CD8-positive, alpha-beta T cell (primary cell): ENCODE measurements at regions of chr7 and their contacts with region 1.

Region 1: GRCh38 chr7:157612664-157613561 is 276.1 kb downstream of the DNAJB6 start:
- DNase-seq: peak; percentile 32 to 85 (median 74)
- ATAC-seq: peak; percentile 79
- H3K4me3 ChIP-seq: peak overlapping the region; percentile 58 to 70
- H3K4me3 Mint-ChIP-seq: peak overlapping the region; percentile 87
- H3K27ac ChIP-seq: peak overlapping the region in 1 of 2 experiments; percentile 53
- H3K27ac Mint-ChIP-seq: peak overlapping the region; percentile 80
- H3K4me1 ChIP-seq: peaks cover 19% of the 10 kb centered on the region
- H3K4me1 Mint-ChIP-seq: peaks cover 20% of the 10 kb centered on the region
- H3K27me3 ChIP-seq: no peaks in the 10 kb centered on the region
- H3K27me3 Mint-ChIP-seq: no peaks in the 10 kb centered on the region
- CTCF ChIP-seq: no peak

Region 2: GRCh38 chr7:157502701-157503111 is 110.2 kb before region 1 on chr7:
- CTCF ChIA-PET with region 1: no interaction called
- POLR2A ChIA-PET with region 1: interaction called, 3 read pairs
- intact Hi-C with region 1: loop called in 1 of 2 experiments (anchors 2 kb)
- DNase-seq: peak; percentile 45 to 93 (median 70)
- ATAC-seq: peak; percentile 95
- H3K4me3 ChIP-seq: peak overlapping the region; percentile 15 to 22
- H3K4me3 Mint-ChIP-seq: peak overlapping the region; percentile 79
- H3K27ac ChIP-seq: peak overlapping the region; percentile 50 to 53
- H3K27ac Mint-ChIP-seq: peak overlapping the region; percentile 92
- H3K4me1 ChIP-seq: peaks cover 22% of the 10 kb centered on the region
- H3K4me1 Mint-ChIP-seq: peaks cover 25% of the 10 kb centered on the region
- H3K27me3 ChIP-seq: no peaks in the 10 kb centered on the region
- H3K27me3 Mint-ChIP-seq: peaks cover 8% of the 10 kb centered on the region
- CTCF ChIP-seq: no peak

Region 3: GRCh38 chr7:157568770-157569584 is 43.9 kb before region 1 on chr7:
- CTCF ChIA-PET with region 1: no interaction called
- POLR2A ChIA-PET with region 1: no interaction called
- intact Hi-C with region 1: no loop called
- DNase-seq: peak; percentile 26 to 83 (median 62)
- ATAC-seq: peak; percentile 80
- H3K4me3 ChIP-seq: peak overlapping the region; percentile 40 to 52
- H3K4me3 Mint-ChIP-seq: peak overlapping the region; percentile 89
- H3K27ac ChIP-seq: peak overlapping the region in 1 of 2 experiments; percentile 20
- H3K27ac Mint-ChIP-seq: peak overlapping the region; percentile 79
- H3K4me1 ChIP-seq: peaks cover 16% of the 10 kb centered on the region
- H3K4me1 Mint-ChIP-seq: peaks cover 22% of the 10 kb centered on the region
- H3K27me3 ChIP-seq: peaks cover 0 to 6% of the 10 kb centered on the region in 2 experiments
- H3K27me3 Mint-ChIP-seq: peaks cover 2% of the 10 kb centered on the region
- CTCF ChIP-seq: no peak

Region 4: GRCh38 chr7:157684157-157684908 is 71.4 kb after region 1 on chr7:
- CTCF ChIA-PET with region 1: no interaction called
- POLR2A ChIA-PET with region 1: no interaction called
- intact Hi-C with region 1: loop called in 1 of 2 experiments (anchors 10 kb)
- DNase-seq: no peak
- ATAC-seq: no peak
- H3K4me3 ChIP-seq: no peak overlapping the region
- H3K4me3 Mint-ChIP-seq: peak overlapping the region; percentile 56
- H3K27ac ChIP-seq: no peak overlapping the region
- H3K27ac Mint-ChIP-seq: no peak overlapping the region
- H3K4me1 ChIP-seq: peaks cover 34% of the 10 kb centered on the region
- H3K4me1 Mint-ChIP-seq: peaks cover 30% of the 10 kb centered on the region
- H3K27me3 ChIP-seq: peaks cover 23 to 59% of the 10 kb centered on the region in 2 experiments
- H3K27me3 Mint-ChIP-seq: peaks cover 66% of the 10 kb centered on the region
- CTCF ChIP-seq: no peak